Caco-2 (cell line): ENCODE measurements at regions of chr3 and their contacts with region 1.

Region 1: GRCh38 chr3:163622384-163622783 is 1455.9 kb downstream of the SI start:
- DNase-seq: peak; percentile 38 to 45
- H3K4me3 ChIP-seq: no peak overlapping the region
- H3K4me3 Mint-ChIP-seq: no peak overlapping the region
- H3K27ac Mint-ChIP-seq: no peak overlapping the region
- H3K4me1 ChIP-seq: no peaks in the 10 kb centered on the region
- H3K4me1 Mint-ChIP-seq: no peaks in the 10 kb centered on the region
- H3K27me3 ChIP-seq: no peaks in the 10 kb centered on the region
- H3K27me3 Mint-ChIP-seq: no peaks in the 10 kb centered on the region
- CTCF ChIP-seq: peak; percentile 30 to 72

Region 2: GRCh38 chr3:163056874-163057497 is 565.4 kb before region 1 on chr3:
- CTCF ChIA-PET with region 1: no interaction called
- POLR2A ChIA-PET with region 1: no interaction called
- intact Hi-C with region 1: loop called (anchors 1 kb)
- DNase-seq: peak in 1 of 2 experiments; percentile 67
- H3K4me3 ChIP-seq: no peak overlapping the region
- H3K4me3 Mint-ChIP-seq: no peak overlapping the region
- H3K27ac Mint-ChIP-seq: no peak overlapping the region
- H3K4me1 ChIP-seq: no peaks in the 10 kb centered on the region
- H3K4me1 Mint-ChIP-seq: no peaks in the 10 kb centered on the region
- H3K27me3 ChIP-seq: no peaks in the 10 kb centered on the region
- H3K27me3 Mint-ChIP-seq: no peaks in the 10 kb centered on the region
- CTCF ChIP-seq: peak; percentile 56 to 61

Region 3: GRCh38 chr3:163476183-163476582 is 146.2 kb before region 1 on chr3:
- CTCF ChIA-PET with region 1: no interaction called
- POLR2A ChIA-PET with region 1: no interaction called
- intact Hi-C with region 1: loop called (anchors 1 kb)
- DNase-seq: peak in 1 of 2 experiments; percentile 13
- H3K4me3 ChIP-seq: no peak overlapping the region
- H3K4me3 Mint-ChIP-seq: no peak overlapping the region
- H3K27ac Mint-ChIP-seq: no peak overlapping the region
- H3K4me1 ChIP-seq: no peaks in the 10 kb centered on the region
- H3K4me1 Mint-ChIP-seq: no peaks in the 10 kb centered on the region
- H3K27me3 ChIP-seq: no peaks in the 10 kb centered on the region
- H3K27me3 Mint-ChIP-seq: no peaks in the 10 kb centered on the region
- CTCF ChIP-seq: peak; percentile 12 to 17

Region 4: DNA sequence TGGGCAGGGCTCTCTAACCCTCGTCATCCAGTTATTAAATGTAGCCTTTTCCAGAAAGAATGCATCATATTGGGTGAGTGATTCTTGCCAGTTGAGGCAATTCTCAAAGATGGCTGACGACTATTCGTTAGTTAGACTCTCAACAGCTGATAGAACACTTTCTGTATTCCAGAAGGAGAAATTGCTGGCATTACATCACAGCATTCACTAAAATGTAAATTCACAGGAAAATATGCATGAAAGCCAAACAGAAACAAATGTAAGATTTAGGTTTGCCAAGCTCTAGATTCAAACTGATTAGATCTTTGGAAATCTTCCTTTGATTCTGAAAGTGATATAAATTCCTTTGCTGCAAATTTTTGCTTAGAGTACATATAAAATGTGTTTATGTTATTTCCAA is 45.1 kb before region 1 on chr3:
- CTCF ChIA-PET with region 1: no interaction called
- POLR2A ChIA-PET with region 1: no interaction called
- intact Hi-C with region 1: no loop called
- DNase-seq: no peak
- H3K4me3 ChIP-seq: no peak overlapping the region
- H3K4me3 Mint-ChIP-seq: no peak overlapping the region
- H3K27ac Mint-ChIP-seq: no peak overlapping the region
- H3K4me1 ChIP-seq: no peaks in the 10 kb centered on the region
- H3K4me1 Mint-ChIP-seq: no peaks in the 10 kb centered on the region
- H3K27me3 ChIP-seq: no peaks in the 10 kb centered on the region
- H3K27me3 Mint-ChIP-seq: no peaks in the 10 kb centered on the region
- CTCF ChIP-seq: no peak

Region 5: DNA sequence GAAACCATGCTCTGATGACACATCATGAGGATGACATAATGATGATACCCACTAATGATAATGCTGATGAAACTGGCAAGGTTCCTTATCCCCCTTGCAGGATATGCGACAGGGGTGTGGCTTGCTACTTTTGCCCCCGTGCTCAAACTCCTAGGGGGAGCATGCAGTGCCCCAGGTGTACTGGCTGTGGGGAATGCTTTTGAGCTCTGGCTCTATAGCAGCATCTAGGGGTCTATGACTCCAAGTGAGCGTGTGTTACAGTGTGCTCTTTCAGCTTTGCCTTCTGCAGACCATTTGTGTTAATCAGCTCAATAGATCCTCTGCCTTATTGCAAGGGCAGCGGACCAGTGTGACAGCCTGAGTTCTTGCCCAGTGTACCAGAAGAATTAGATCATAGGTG is 216.4 kb after region 1 on chr3:
- CTCF ChIA-PET with region 1: no interaction called
- POLR2A ChIA-PET with region 1: no interaction called
- intact Hi-C with region 1: no loop called
- DNase-seq: no peak
- H3K4me3 ChIP-seq: no peak overlapping the region
- H3K4me3 Mint-ChIP-seq: no peak overlapping the region
- H3K27ac Mint-ChIP-seq: no peak overlapping the region
- H3K4me1 ChIP-seq: no peaks in the 10 kb centered on the region
- H3K4me1 Mint-ChIP-seq: no peaks in the 10 kb centered on the region
- H3K27me3 ChIP-seq: no peaks in the 10 kb centered on the region
- H3K27me3 Mint-ChIP-seq: no peaks in the 10 kb centered on the region
- CTCF ChIP-seq: no peak